Adrenal gland (tissue), 19 donors: ENCODE measurements at regions of chr15 and their contacts with region 1.

Region 1: GRCh38 chr15:49145651-49146609 is 9.5 kb downstream of the COPS2 start:
- DNase-seq: peak in 5 of 7 donors; percentile 45 to 65 (median 47)
- H3K4me3 ChIP-seq: no peak overlapping the region
- H3K27ac ChIP-seq: no peak overlapping the region
- H3K4me1 ChIP-seq: peaks cover 0 to 54% of the 10 kb centered on the region in 2 donors
- H3K27me3 ChIP-seq: no peaks in the 10 kb centered on the region
- CTCF ChIP-seq: peak; percentile 45 to 68 (median 56)
- POLR2A ChIP-seq: no peak

Region 2: DNA sequence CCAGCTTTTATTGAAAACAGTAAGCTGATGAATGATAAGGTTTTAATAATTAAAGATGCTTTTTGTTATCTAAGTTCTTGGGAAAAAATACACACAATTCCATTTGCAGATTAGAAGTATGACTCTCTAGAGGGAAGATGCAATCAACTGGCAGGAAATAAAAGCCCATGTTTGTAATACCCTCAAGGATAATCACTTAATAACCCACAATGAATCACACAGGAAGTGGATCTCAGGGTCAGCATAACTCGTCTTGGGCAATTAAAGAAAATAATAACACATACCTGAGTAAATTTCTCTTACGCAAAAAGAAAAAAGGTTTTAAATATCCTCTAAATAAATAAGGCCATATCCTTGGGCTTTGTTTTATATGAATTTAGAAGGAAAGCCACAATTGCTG is 277.4 kb before region 1 on chr15:
- intact Hi-C with region 1: loop called (anchors 5 to 10 kb)
- DNase-seq: no peak
- H3K4me3 ChIP-seq: no peak overlapping the region
- H3K27ac ChIP-seq: no peak overlapping the region
- H3K4me1 ChIP-seq: peaks cover 0 to 14% of the 10 kb centered on the region in 2 donors
- H3K27me3 ChIP-seq: no peaks in the 10 kb centered on the region
- CTCF ChIP-seq: no peak
- POLR2A ChIP-seq: no peak

Region 3: DNA sequence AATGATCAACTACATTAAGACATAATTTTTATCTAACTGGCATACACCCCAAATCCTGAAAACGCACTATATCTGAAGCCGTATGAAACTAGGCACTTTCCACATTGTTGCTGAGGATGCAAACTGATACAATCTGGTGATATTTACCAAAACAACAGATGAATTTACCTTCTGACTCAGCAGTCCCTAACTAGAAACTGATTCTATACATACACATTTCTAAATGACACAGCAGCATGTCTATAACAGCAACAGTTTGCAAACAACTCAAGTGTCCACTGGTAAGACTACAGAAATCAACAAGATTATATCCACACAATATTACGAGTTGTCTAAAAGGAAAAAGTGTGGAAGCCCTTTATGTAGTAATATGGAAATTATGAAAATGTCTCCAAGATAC is 122.6 kb before region 1 on chr15:
- intact Hi-C with region 1: loop called in 1 of 2 experiments (anchors 10 kb)
- DNase-seq: no peak
- H3K4me3 ChIP-seq: no peak overlapping the region
- H3K27ac ChIP-seq: no peak overlapping the region
- H3K4me1 ChIP-seq: no peaks in the 10 kb centered on the region
- H3K27me3 ChIP-seq: no peaks in the 10 kb centered on the region
- CTCF ChIP-seq: no peak
- POLR2A ChIP-seq: no peak

Region 4: DNA sequence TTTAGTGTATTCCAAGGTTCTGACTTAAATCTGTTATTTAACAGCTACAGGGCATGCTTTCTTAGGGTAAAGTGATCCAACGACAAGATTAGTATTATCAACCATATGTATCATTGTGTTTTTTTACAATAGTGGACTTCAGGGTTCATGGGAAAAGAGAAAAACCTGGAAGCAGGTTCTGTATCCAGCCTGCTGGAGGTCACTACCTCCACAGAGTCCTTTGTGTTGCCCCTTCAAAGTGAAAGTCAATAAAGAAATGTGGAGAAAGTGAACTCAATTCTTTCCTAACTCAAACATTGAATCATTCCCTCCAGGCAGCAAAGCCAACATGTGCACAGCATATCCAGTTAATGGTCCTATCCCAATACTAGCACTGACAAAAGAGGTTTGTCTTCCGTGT is 322.5 kb after region 1 on chr15:
- intact Hi-C with region 1: no loop called
- DNase-seq: no peak
- H3K4me3 ChIP-seq: no peak overlapping the region
- H3K27ac ChIP-seq: no peak overlapping the region
- H3K4me1 ChIP-seq: no peaks in the 10 kb centered on the region
- H3K27me3 ChIP-seq: no peaks in the 10 kb centered on the region
- CTCF ChIP-seq: no peak
- POLR2A ChIP-seq: no peak